ENCODE measurements at regions of chr11 and their contacts with region 1.

Region 1: DNA sequence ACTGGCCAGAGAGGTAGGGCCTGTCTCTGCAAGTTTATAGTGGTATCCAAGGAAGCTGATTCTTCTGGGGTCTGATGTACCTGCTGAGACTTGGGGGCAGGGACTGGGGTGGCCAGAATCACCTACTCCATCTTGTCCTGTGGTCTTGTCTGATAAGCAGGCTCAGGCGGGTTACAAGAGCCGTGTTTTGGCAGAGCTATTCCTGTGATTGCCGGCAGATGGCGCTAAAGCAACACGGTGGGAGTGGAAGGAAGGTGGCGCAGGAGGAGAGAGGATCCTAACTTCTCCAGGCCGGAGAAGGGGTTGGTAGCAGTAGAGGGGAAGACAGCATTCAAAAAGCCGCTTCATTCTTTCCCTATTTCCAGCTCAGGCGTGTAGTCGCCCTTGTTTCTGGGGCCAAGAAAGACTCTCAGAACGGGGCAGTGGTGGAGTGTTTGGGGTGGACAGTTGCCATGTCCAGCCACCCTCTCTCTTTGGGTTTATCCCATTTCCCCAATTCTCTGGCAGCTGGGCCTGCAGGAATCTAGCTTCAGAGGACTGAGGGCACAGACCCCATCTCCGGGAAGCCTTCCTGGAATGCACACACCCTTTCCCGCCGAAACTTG is 15.1 kb downstream of the CHRM1 start:
- DNase-seq: peak; percentile 25 to 86 (median 68)
- ATAC-seq: peak; percentile 70 to 76 (median 73)
- H3K4me3 ChIP-seq: no peak overlapping the region
- H3K4me3 Mint-ChIP-seq: no peak overlapping the region
- H3K27ac ChIP-seq: no peak overlapping the region
- H3K27ac Mint-ChIP-seq: no peak overlapping the region
- H3K4me1 ChIP-seq: peaks cover 0 to 5% of the 10 kb centered on the region in 2 experiments
- H3K4me1 Mint-ChIP-seq: peaks cover 0 to 2% (median 2%) of the 10 kb centered on the region in 3 donors
- H3K27me3 ChIP-seq: peaks cover 0 to 41% of the 10 kb centered on the region in 2 experiments
- H3K27me3 Mint-ChIP-seq: peaks cover 3 to 19% of the 10 kb centered on the region in 2 donors

Region 2: GRCh38 chr11:62981743-62982142 is 75.7 kb after region 1 on chr11:
- CTCF ChIA-PET with region 1: no interaction called
- POLR2A ChIA-PET with region 1: no interaction called
- DNase-seq: no peak
- ATAC-seq: no peak
- H3K4me3 ChIP-seq: no peak overlapping the region
- H3K4me3 Mint-ChIP-seq: no peak overlapping the region
- H3K27ac ChIP-seq: no peak overlapping the region
- H3K27ac Mint-ChIP-seq: no peak overlapping the region
- H3K4me1 ChIP-seq: no peaks in the 10 kb centered on the region
- H3K4me1 Mint-ChIP-seq: no peaks in the 10 kb centered on the region
- H3K27me3 ChIP-seq: peaks cover 0 to 36% of the 10 kb centered on the region in 2 experiments
- H3K27me3 Mint-ChIP-seq: peaks cover 9 to 18% of the 10 kb centered on the region in 2 donors

Region 3: GRCh38 chr11:63023841-63024648 is 118.0 kb after region 1 on chr11:
- CTCF ChIA-PET with region 1: interaction called, 23 to 58 read pairs
- POLR2A ChIA-PET with region 1: no interaction called
- DNase-seq: peak; percentile 49 to 86 (median 77)
- ATAC-seq: peak; percentile 82 to 90 (median 83)
- H3K4me3 ChIP-seq: no peak overlapping the region
- H3K4me3 Mint-ChIP-seq: no peak overlapping the region
- H3K27ac ChIP-seq: no peak overlapping the region
- H3K27ac Mint-ChIP-seq: peak overlapping the region in 1 of 2 donors; percentile 36
- H3K4me1 ChIP-seq: peaks cover 0 to 5% of the 10 kb centered on the region in 2 experiments
- H3K4me1 Mint-ChIP-seq: peaks cover 4 to 6% (median 4%) of the 10 kb centered on the region in 3 donors
- H3K27me3 ChIP-seq: peaks cover 0 to 31% of the 10 kb centered on the region in 2 experiments
- H3K27me3 Mint-ChIP-seq: peaks cover 21 to 34% of the 10 kb centered on the region in 2 donors

Measured in T-cell (primary cell).